Activated CD4-positive, alpha-beta T cell treated with anti-CD3 and anti-CD28 coated beads for 36 hours (primary cell): ENCODE measurements at regions of chr1 and their contacts with region 1.

Region 1: DNA sequence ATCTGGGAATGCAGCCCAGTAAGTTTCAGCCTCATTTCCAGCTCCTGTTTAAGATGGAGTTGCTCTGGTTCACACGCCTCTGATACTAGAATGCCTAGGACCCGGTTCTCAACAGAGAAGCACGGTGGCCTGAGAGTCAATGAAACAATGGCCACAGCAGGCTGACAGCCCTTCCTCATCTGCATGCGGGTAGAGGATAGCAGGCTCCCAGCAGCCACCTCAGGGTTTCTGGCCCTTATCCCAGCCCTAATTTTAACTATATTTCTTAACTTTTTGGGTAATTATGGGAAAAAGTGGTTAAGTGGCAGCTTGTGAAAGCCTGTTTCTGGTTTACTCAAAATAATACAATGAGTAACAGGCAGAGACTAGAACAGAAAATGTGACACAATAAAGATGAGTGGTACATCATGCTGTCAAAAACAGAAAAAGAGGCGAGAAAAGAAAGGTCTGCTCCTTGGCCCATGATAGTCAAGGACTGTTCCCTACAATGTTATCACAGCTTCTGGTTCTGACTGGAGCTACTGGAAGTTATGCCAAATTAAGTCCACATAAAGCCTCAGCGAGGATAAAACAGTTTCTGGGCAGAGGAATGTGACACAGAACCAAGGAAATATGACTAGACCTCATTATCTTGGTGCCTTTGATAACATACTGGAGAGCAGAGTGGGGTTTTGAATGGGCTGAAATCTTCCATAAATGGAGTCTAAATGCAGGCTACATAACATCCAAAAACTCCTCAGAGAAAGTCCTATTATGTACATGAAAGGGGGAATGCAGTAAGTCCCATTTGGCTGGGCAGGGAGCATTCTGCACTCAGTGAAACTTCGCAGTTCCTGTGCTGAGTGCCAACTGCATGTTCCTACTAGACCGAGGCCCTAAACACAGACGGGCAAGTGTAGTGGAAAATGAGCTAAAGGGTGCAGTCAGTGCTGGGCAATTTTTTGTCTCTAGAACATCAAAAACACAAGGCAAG is 92.1 kb downstream of the NIBAN1 start:
- DNase-seq: peak; percentile 50
- ATAC-seq: peak; percentile 79
- H3K4me3 Mint-ChIP-seq: peak overlapping the region; percentile 5
- H3K27ac Mint-ChIP-seq: peak overlapping the region; percentile 90
- H3K4me1 Mint-ChIP-seq: peaks cover 27% of the 10 kb centered on the region
- H3K27me3 Mint-ChIP-seq: peaks cover 6% of the 10 kb centered on the region

Region 2: GRCh38 chr1:184836934-184837895 is 45.0 kb before region 1 on chr1:
- CTCF ChIA-PET with region 1: interaction called, 3 read pairs
- POLR2A ChIA-PET with region 1: no interaction called
- intact Hi-C with region 1: loop called in 1 of 2 experiments (anchors 2 kb)
- DNase-seq: no peak
- ATAC-seq: no peak
- H3K4me3 Mint-ChIP-seq: no peak overlapping the region
- H3K27ac Mint-ChIP-seq: no peak overlapping the region
- H3K4me1 Mint-ChIP-seq: peaks cover 14% of the 10 kb centered on the region
- H3K27me3 Mint-ChIP-seq: no peaks in the 10 kb centered on the region

Region 3: DNA sequence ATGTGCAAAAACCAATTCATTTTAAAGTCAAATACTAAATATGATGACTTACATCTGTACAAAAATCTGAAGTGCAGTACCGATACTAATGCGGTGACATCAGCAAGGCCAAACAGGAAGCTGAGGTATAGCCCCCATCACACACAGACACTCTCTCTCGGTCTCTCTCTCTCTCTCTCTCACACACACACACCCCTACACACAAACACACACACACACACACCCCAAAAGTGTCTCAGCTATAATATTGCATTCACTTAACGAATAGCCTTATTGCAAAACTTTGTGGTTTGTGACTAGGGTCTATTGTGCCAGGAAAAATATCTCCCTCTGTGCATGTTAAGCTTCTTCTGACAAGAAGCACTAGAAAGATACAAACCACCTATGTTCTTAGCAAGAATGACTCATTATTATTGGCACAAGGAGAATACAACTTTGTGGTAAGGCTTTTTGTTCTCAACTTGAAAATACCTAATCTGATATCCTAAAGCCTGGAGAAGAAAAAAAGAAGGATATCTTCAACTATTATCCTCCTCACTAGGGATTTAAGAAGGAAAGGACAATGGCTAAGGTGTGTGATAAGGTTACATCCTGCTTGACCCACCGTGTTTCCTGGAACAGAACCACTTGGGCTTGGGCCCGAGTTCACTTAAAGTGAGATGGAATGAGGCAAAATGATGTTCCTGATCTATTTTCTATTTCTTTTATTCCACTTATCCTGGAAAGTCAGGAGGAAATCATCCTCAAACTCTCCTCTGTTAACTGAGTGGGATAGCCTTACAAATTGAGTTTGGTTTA is 15.0 kb before region 1 on chr1:
- CTCF ChIA-PET with region 1: interaction called, 3 read pairs
- POLR2A ChIA-PET with region 1: interaction called, 22 read pairs
- intact Hi-C with region 1: loop called (anchors 1 kb)
- DNase-seq: peak; percentile 75
- ATAC-seq: peak; percentile 85
- H3K4me3 Mint-ChIP-seq: peak overlapping the region; percentile 32
- H3K27ac Mint-ChIP-seq: peak overlapping the region; percentile 90
- H3K4me1 Mint-ChIP-seq: peaks cover 46% of the 10 kb centered on the region
- H3K27me3 Mint-ChIP-seq: no peaks in the 10 kb centered on the region

Region 4: GRCh38 chr1:184910691-184911091 is 28.5 kb after region 1 on chr1:
- CTCF ChIA-PET with region 1: no interaction called
- POLR2A ChIA-PET with region 1: no interaction called
- intact Hi-C with region 1: no loop called
- DNase-seq: no peak
- ATAC-seq: no peak
- H3K4me3 Mint-ChIP-seq: no peak overlapping the region
- H3K27ac Mint-ChIP-seq: no peak overlapping the region
- H3K4me1 Mint-ChIP-seq: no peaks in the 10 kb centered on the region
- H3K27me3 Mint-ChIP-seq: no peaks in the 10 kb centered on the region

Region 5: DNA sequence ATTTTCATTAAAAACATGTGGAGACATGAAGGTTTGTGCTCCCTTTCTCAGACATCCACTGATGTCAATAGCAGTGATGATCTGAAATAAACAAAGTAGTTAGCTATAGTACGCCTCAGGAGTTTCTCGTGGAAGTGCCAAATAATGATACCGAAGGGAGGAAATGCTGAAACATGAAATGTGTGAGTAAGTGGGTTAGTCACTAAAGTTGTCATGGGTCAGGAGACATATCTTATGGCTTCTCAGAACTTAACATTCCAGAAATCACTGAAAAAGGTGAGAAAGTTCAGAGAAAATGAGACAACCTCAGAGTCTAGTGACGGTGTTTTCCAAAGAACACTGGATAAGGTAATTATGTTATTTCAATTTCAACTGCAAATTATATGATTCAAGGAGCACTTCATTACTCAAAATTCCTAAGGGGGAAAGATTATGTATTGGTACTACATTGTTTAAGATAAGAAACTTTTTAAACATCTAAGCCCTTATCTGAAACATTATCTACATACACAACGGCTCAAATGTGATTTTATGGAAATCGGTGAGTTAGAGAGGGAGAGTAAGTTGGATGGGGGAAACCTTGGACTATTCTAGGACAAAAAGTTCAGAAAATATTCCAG is 71.5 kb after region 1 on chr1:
- CTCF ChIA-PET with region 1: no interaction called
- POLR2A ChIA-PET with region 1: no interaction called
- intact Hi-C with region 1: loop called (anchors 1 to 2 kb)
- DNase-seq: no peak
- ATAC-seq: peak; percentile 88
- H3K4me3 Mint-ChIP-seq: peak overlapping the region; percentile 40
- H3K27ac Mint-ChIP-seq: peak overlapping the region; percentile 65
- H3K4me1 Mint-ChIP-seq: peaks cover 20% of the 10 kb centered on the region
- H3K27me3 Mint-ChIP-seq: no peaks in the 10 kb centered on the region

Region 6: GRCh38 chr1:184992271-184992670 is 110.0 kb after region 1 on chr1:
- CTCF ChIA-PET with region 1: no interaction called
- POLR2A ChIA-PET with region 1: no interaction called
- intact Hi-C with region 1: no loop called
- DNase-seq: no peak
- ATAC-seq: no peak
- H3K4me3 Mint-ChIP-seq: no peak overlapping the region
- H3K27ac Mint-ChIP-seq: no peak overlapping the region
- H3K4me1 Mint-ChIP-seq: no peaks in the 10 kb centered on the region
- H3K27me3 Mint-ChIP-seq: peaks cover 13% of the 10 kb centered on the region

Region 7: DNA sequence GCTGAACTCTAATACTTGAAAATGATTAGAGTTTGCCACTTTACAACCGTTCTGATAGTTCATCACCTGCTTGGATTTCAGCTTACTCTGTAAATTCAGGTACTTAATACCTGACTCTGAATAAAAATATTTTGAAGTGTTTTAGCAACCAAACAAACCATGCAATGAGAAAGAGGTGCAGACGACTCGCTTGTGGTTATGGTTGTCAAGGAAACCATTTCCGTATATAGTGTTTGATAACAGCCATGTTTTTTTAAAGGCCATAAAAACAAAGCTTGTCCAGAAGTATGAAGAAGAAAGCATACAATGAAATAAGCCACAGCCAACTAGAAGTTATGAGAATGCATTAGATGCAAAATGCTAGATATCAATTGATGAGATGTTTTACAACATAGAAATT is 684.8 kb after region 1 on chr1:
- CTCF ChIA-PET with region 1: no interaction called
- POLR2A ChIA-PET with region 1: no interaction called
- intact Hi-C with region 1: loop called in 1 of 2 experiments (anchors 5 kb)
- DNase-seq: peak; percentile 41
- ATAC-seq: peak; percentile 57
- H3K4me3 Mint-ChIP-seq: peak overlapping the region; percentile 22
- H3K27ac Mint-ChIP-seq: peak overlapping the region; percentile 79
- H3K4me1 Mint-ChIP-seq: peaks cover 70% of the 10 kb centered on the region
- H3K27me3 Mint-ChIP-seq: no peaks in the 10 kb centered on the region

Region 8: GRCh38 chr1:185636848-185637247 is 754.6 kb after region 1 on chr1:
- CTCF ChIA-PET with region 1: no interaction called
- POLR2A ChIA-PET with region 1: no interaction called
- intact Hi-C with region 1: loop called in 1 of 2 experiments (anchors 1 kb)
- DNase-seq: peak; percentile 63
- ATAC-seq: peak; percentile 95
- H3K4me3 Mint-ChIP-seq: no peak overlapping the region
- H3K27ac Mint-ChIP-seq: peak overlapping the region; percentile 69
- H3K4me1 Mint-ChIP-seq: peaks cover 14% of the 10 kb centered on the region
- H3K27me3 Mint-ChIP-seq: no peaks in the 10 kb centered on the region